ENCODE measurements at regions of chr1 and their contacts with region 1.

Region 1: GRCh38 chr1:172146141-172146850 is 274.2 kb upstream of the C1orf105 start:
- DNase-seq: no peak
- H3K4me3 ChIP-seq: no peak overlapping the region
- H3K27ac ChIP-seq: no peak overlapping the region
- H3K4me1 ChIP-seq: no peaks in the 10 kb centered on the region
- H3K27me3 ChIP-seq: no peaks in the 10 kb centered on the region
- CTCF ChIP-seq: no peak

Region 2: DNA sequence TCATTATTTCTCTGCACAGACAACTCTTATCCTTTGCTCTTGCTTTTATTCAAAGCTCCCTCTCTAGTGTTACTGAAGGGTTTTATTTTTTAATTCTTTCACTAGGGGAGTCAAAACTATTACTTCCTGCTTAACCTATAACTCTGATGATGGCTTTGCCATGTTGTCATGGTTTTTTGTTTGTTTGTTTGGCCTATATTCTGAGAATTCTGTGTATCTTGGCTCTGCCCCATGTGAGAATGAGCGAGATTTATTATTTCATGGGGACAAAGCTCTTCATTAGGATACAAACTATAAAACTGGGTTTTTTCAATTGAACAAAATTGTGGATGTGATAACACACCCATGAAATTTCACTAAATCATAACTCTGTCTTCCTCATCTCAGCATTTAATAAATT is 83.6 kb after region 1 on chr1:
- CTCF ChIA-PET with region 1: no interaction called
- POLR2A ChIA-PET with region 1: interaction called, 11 read pairs
- intact Hi-C with region 1: no loop called
- DNase-seq: no peak
- H3K4me3 ChIP-seq: no peak overlapping the region
- H3K27ac ChIP-seq: no peak overlapping the region
- H3K4me1 ChIP-seq: no peaks in the 10 kb centered on the region
- H3K27me3 ChIP-seq: no peaks in the 10 kb centered on the region
- CTCF ChIP-seq: no peak

Region 3: DNA sequence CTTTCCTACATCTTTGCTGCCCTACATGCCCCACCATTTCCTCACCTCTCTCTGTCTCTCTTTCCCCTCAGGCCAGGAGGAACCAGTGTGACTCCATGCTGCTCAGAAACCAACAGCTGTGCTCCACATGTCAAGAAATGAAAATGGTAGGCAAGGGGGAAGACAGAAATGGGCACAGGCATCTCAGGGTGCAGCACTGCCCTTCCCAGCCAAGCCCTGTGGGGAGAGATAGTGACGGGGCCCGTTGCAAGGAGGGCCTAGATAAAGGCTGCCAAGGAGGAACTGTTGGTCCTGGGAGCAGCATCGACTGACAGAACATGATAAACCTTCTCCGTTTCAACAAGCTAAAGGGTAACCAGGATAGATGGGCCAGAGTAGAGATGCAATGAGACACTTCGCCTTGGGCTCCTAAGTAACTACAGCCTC is 310.1 kb after region 1 on chr1:
- CTCF ChIA-PET with region 1: no interaction called
- POLR2A ChIA-PET with region 1: no interaction called
- intact Hi-C with region 1: no loop called
- DNase-seq: no peak
- H3K4me3 ChIP-seq: no peak overlapping the region
- H3K27ac ChIP-seq: no peak overlapping the region
- H3K4me1 ChIP-seq: peaks cover 38% of the 10 kb centered on the region
- H3K27me3 ChIP-seq: no peaks in the 10 kb centered on the region
- CTCF ChIP-seq: no peak

Measured in PC-9 (cell line).